K562 (cell line): ENCODE measurements at regions of chr2 and their contacts with region 1.

Region 1: GRCh38 chr2:46549166-46549844 is 69.9 kb downstream of the TMEM247 start:
- DNase-seq: no peak
- ATAC-seq: no peak
- H3K4me3 ChIP-seq: no peak overlapping the region
- H3K27ac ChIP-seq: no peak overlapping the region
- H3K4me1 ChIP-seq: peaks cover 10 to 26% of the 10 kb centered on the region in 2 experiments; a peak in 4 of 5 replicates
- H3K27me3 ChIP-seq: no peaks in the 10 kb centered on the region
- CTCF ChIP-seq: no peak
- EP300 ChIP-seq: no peak
- POLR2A ChIP-seq: no peak
- RAD21 ChIP-seq: no peak

Region 2: DNA sequence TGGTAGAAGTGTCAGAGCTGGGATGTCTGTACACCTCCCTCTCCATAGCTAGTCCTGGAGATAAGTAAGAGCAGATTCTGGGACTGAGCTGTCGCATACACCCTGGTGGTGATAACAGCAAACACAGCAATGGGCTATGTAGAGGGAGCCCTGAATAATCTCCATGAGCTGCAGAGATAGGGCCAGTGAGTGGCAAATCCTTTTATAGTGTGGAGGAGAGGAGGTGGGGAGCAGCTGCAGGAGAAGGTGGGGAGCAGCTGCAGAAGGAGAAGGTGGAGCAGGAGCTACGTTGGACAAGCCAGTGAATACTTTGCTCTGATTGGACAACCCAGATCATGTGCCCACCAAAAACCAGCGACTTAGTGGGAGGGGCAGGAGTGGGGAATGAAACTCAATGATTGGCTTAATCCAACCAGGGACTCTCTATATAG is 15.5 kb after region 1 on chr2:
- CTCF ChIA-PET with region 1: interaction called, 3 read pairs
- POLR2A ChIA-PET with region 1: interaction called, 12 read pairs
- in situ Hi-C with region 1: no loop called
- intact Hi-C with region 1: no loop called
- DNase-seq: peak; percentile 61 to 69 (median 64)
- ATAC-seq: peak; percentile 92
- H3K4me3 ChIP-seq: no peak overlapping the region
- H3K27ac ChIP-seq: no peak overlapping the region
- H3K4me1 ChIP-seq: peaks cover 3 to 23% of the 10 kb centered on the region in 2 experiments; a peak in 4 of 5 replicates
- H3K27me3 ChIP-seq: no peaks in the 10 kb centered on the region
- CTCF ChIP-seq: peak; percentile 43 to 62 (median 58)
- EP300 ChIP-seq: no peak
- POLR2A ChIP-seq: no peak
- RAD21 ChIP-seq: peak; percentile 26 to 43